CD8-positive, alpha-beta T cell (primary cell): ENCODE measurements at regions of chr18 and their contacts with region 1.

Region 1: GRCh38 chr18:75209129-75209950 is at the start of gene PTGR3:
- DNase-seq: peak; percentile 44 to 91 (median 76)
- ATAC-seq: peak; percentile 51
- H3K4me3 ChIP-seq: peak within 1 kb of the TSS; percentile 65 to 82
- H3K4me3 Mint-ChIP-seq: peak within 1 kb of the TSS; percentile 99
- H3K27ac ChIP-seq: peak within 1 kb of the TSS; percentile 66 to 75
- H3K27ac Mint-ChIP-seq: peak within 1 kb of the TSS; percentile 93
- H3K4me1 ChIP-seq: peaks cover 55% of the 10 kb centered on the region
- H3K4me1 Mint-ChIP-seq: peaks cover 66% of the 10 kb centered on the region
- H3K27me3 ChIP-seq: no peaks in the 10 kb centered on the region
- H3K27me3 Mint-ChIP-seq: peaks cover 3% of the 10 kb centered on the region
- CTCF ChIP-seq: no peak
- total RNA-seq, gene PTGR3: 6.3 to 7.8 TPM

Region 2: DNA sequence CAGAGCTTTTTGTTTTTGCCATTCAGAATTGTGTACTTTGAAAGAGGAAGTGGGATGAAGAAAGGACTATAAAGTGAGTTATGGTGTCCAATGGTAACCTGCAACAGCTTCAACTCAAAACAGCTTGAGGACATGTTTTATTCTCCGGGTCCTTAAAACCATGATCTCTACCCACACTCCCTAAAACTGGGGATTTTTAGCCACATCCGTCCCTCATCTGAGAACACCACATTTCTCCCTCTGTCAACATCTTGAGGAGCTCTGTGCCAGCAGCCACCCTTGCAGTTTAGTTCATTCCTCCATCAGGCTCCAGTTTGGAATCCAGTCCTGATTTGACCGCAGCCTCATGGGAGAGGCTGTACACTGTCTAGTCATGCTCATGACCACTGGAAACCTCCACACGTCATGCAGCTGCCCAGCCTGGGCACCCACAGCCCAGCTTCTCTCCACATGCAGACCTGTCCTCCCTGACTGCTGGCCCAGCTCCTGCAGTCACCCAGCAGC is 831.1 kb before region 1 on chr18:
- CTCF ChIA-PET with region 1: no interaction called
- POLR2A ChIA-PET with region 1: no interaction called
- intact Hi-C with region 1: loop called in 1 of 2 experiments (anchors 10 kb)
- DNase-seq: peak in 5 of 9 experiments; percentile 18 to 80 (median 51)
- ATAC-seq: peak; percentile 35
- H3K4me3 ChIP-seq: peak overlapping the region in 1 of 2 experiments; percentile 41
- H3K4me3 Mint-ChIP-seq: peak overlapping the region; percentile 64
- H3K27ac ChIP-seq: peak overlapping the region in 1 of 2 experiments; percentile 56
- H3K27ac Mint-ChIP-seq: peak overlapping the region; percentile 88
- H3K4me1 ChIP-seq: peaks cover 52% of the 10 kb centered on the region
- H3K4me1 Mint-ChIP-seq: peaks cover 58% of the 10 kb centered on the region
- H3K27me3 ChIP-seq: no peaks in the 10 kb centered on the region
- H3K27me3 Mint-ChIP-seq: no peaks in the 10 kb centered on the region
- CTCF ChIP-seq: no peak

Region 3: GRCh38 chr18:75070625-75071483 is 138.5 kb before region 1 on chr18:
- CTCF ChIA-PET with region 1: no interaction called
- POLR2A ChIA-PET with region 1: interaction called, 14 read pairs
- intact Hi-C with region 1: loop called (anchors 1 to 5 kb)
- DNase-seq: peak; percentile 19 to 88 (median 74)
- ATAC-seq: peak; percentile 90
- H3K4me3 ChIP-seq: peak overlapping the region; percentile 9 to 46
- H3K4me3 Mint-ChIP-seq: peak overlapping the region; percentile 80
- H3K27ac ChIP-seq: peak overlapping the region; percentile 50 to 86
- H3K27ac Mint-ChIP-seq: peak overlapping the region; percentile 97
- H3K4me1 ChIP-seq: peaks cover 28% of the 10 kb centered on the region
- H3K4me1 Mint-ChIP-seq: peaks cover 41% of the 10 kb centered on the region
- H3K27me3 ChIP-seq: no peaks in the 10 kb centered on the region
- H3K27me3 Mint-ChIP-seq: no peaks in the 10 kb centered on the region
- CTCF ChIP-seq: no peak

Region 4: GRCh38 chr18:75247611-75248421 is 38.5 kb after region 1 on chr18:
- CTCF ChIA-PET with region 1: interaction called, 7 read pairs
- POLR2A ChIA-PET with region 1: interaction called, 25 read pairs
- intact Hi-C with region 1: loop called (anchors 1 kb)
- DNase-seq: peak in 2 of 9 experiments; percentile 50 to 72
- ATAC-seq: peak; percentile 43
- H3K4me3 ChIP-seq: peak overlapping the region; percentile 34 to 36
- H3K4me3 Mint-ChIP-seq: peak overlapping the region; percentile 85
- H3K27ac ChIP-seq: peak overlapping the region; percentile 36 to 67
- H3K27ac Mint-ChIP-seq: peak overlapping the region; percentile 94
- H3K4me1 ChIP-seq: peaks cover 48% of the 10 kb centered on the region
- H3K4me1 Mint-ChIP-seq: peaks cover 80% of the 10 kb centered on the region
- H3K27me3 ChIP-seq: no peaks in the 10 kb centered on the region
- H3K27me3 Mint-ChIP-seq: no peaks in the 10 kb centered on the region
- CTCF ChIP-seq: no peak

Region 5: DNA sequence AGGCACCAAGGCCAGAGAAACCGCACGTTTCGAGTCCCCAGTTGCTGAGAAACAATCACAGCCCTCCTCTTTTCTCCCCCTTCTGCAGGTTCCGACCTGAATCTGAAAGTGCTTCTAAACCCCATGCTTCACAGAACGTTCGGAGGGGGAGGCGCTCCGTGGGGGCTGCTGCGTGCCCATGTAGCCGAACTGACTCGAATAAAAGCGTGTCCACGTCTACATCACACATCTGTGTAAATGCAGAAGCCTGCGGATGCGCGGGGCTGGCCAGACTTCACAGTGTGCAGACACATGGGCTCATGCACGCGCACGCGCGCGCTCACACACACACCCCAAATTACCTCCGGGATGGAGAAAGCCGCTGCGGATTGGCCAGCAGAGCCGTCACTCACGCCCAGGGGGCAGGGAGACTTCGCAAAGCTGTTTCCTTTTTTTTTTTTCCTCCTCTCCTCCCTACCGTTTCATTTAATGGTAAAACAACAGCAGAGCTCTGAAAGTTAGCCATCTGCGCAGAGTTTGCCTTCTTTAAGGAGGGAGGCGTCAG is 1283.4 kb after region 1 on chr18:
- CTCF ChIA-PET with region 1: no interaction called
- POLR2A ChIA-PET with region 1: no interaction called
- intact Hi-C with region 1: loop called in 1 of 2 experiments (anchors 10 kb)
- DNase-seq: peak; percentile 93 to 100 (median 97)
- ATAC-seq: peak; percentile 69
- H3K4me3 ChIP-seq: peak overlapping the region; percentile 66 to 99
- H3K4me3 Mint-ChIP-seq: peak overlapping the region; percentile 92
- H3K27ac ChIP-seq: peak overlapping the region; percentile 46 to 66
- H3K27ac Mint-ChIP-seq: peak overlapping the region; percentile 87
- H3K4me1 ChIP-seq: peaks cover 19% of the 10 kb centered on the region
- H3K4me1 Mint-ChIP-seq: peaks cover 37% of the 10 kb centered on the region
- H3K27me3 ChIP-seq: peaks cover 0 to 9% of the 10 kb centered on the region in 2 experiments
- H3K27me3 Mint-ChIP-seq: peaks cover 28% of the 10 kb centered on the region
- CTCF ChIP-seq: no peak

Region 6: GRCh38 chr18:77061946-77062517 is 1852.7 kb after region 1 on chr18:
- CTCF ChIA-PET with region 1: no interaction called
- POLR2A ChIA-PET with region 1: no interaction called
- intact Hi-C with region 1: loop called in 1 of 2 experiments (anchors 5 kb)
- DNase-seq: peak in 4 of 9 experiments; percentile 38 to 71 (median 51)
- ATAC-seq: peak; percentile 6
- H3K4me3 ChIP-seq: peak overlapping the region in 1 of 2 experiments; percentile 9
- H3K4me3 Mint-ChIP-seq: peak overlapping the region; percentile 33
- H3K27ac ChIP-seq: peak overlapping the region; percentile 80 to 86
- H3K27ac Mint-ChIP-seq: peak overlapping the region; percentile 99
- H3K4me1 ChIP-seq: peaks cover 80% of the 10 kb centered on the region
- H3K4me1 Mint-ChIP-seq: peaks cover 83% of the 10 kb centered on the region
- H3K27me3 ChIP-seq: no peaks in the 10 kb centered on the region
- H3K27me3 Mint-ChIP-seq: no peaks in the 10 kb centered on the region
- CTCF ChIP-seq: no peak